ENCODE measurements at regions of chr6 and their contacts with region 1.

Region 1: DNA sequence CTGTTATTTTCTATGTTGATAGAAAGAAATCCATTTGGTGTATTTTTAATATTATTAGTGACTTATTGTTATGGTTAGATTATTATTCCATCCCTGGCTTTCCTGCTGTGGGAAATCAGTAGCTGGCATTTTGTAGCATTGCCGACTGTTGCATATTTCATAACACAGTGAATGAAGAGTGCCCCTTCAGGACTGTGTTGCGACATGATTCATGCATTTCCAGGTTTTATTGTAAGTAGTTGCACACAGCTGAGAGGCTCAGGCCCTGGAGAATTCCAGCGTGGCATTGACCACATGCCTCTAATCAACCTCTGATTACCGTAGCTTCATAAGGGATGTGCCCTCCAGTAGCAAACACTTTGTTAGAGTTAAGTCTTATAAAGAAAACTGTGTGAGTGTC is 263.9 kb downstream of the FARS2 start:
- DNase-seq: no peak
- ATAC-seq: peak in 1 of 4 donors; percentile 26
- H3K4me3 ChIP-seq: no peak overlapping the region
- H3K27ac ChIP-seq: no peak overlapping the region
- H3K4me1 ChIP-seq: no peaks in the 10 kb centered on the region
- H3K27me3 ChIP-seq: no peaks in the 10 kb centered on the region
- CTCF ChIP-seq: no peak

Region 2: GRCh38 chr6:5422321-5422915 is 102.8 kb before region 1 on chr6:
- intact Hi-C with region 1: loop called in 1 of 2 experiments (anchors 10 kb)
- DNase-seq: no peak
- ATAC-seq: peak; percentile 57 to 90 (median 86)
- H3K4me3 ChIP-seq: no peak overlapping the region
- H3K27ac ChIP-seq: no peak overlapping the region
- H3K4me1 ChIP-seq: no peaks in the 10 kb centered on the region
- H3K27me3 ChIP-seq: no peaks in the 10 kb centered on the region
- CTCF ChIP-seq: peak; percentile 53

Measured in psoas muscle (tissue), 8 donors.